ENCODE measurements at regions of chr6 and their contacts with region 1.

Region 1: GRCh38 chr6:4805553-4806336 is 29.5 kb downstream of the CDYL start:
- DNase-seq: peak; percentile 51 to 80
- ATAC-seq: peak; percentile 62

Region 2: GRCh38 chr6:4581796-4582385 is 223.9 kb before region 1 on chr6:
- intact Hi-C with region 1: no loop called
- DNase-seq: no peak
- ATAC-seq: no peak

Region 3: DNA sequence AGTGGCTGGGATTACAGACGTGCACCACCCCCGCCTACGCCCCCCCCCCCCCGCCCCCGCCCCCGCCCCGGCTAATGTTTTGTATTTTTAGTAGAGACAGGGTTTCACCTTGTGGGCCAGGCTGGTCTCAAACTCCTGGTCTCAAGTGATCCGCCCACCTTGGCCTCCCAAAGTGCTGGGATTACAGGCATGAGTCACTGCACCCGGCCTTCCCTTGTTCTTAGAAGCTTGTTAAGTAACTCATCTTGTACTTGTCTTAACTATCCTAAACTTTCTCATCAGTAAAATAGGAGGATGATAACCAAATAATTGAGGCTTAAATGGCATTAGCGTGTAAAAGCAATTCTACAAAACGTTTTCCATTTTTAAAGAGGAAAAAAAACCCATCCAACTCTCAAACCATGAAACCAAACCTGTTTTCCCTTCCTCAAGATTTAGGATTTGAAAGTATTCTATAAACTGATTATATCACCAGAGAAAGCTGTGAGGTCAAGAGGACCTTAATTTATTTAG is 25.3 kb before region 1 on chr6:
- intact Hi-C with region 1: loop called in 1 of 2 experiments (anchors 2 kb)
- DNase-seq: no peak
- ATAC-seq: no peak